H1 (cell line): ENCODE measurements at regions of chr15 and their contacts with region 1.

Region 1: GRCh38 chr15:45705510-45706473 is 71.0 kb downstream of the SQOR start:
- DNase-seq: peak; percentile 68 to 83
- H3K4me3 ChIP-seq: peak overlapping the region; percentile 38 to 72 (median 62)
- H3K27ac ChIP-seq: no peak overlapping the region
- H3K4me1 ChIP-seq: no peaks in the 10 kb centered on the region
- H3K27me3 ChIP-seq: peaks cover 0 to 3% (median 0%) of the 10 kb centered on the region in 4 experiments; a peak in 3 of 7 replicates
- CTCF ChIP-seq: peak; percentile 67 to 90 (median 74)
- EP300 ChIP-seq: 0 out of 3 replicates have a peak, but pooled peaks of 1 of the 2 experiments have one; percentile 4
- POLR2A ChIP-seq: no peak
- RAD21 ChIP-seq: peak; percentile 82 to 84

Region 2: DNA sequence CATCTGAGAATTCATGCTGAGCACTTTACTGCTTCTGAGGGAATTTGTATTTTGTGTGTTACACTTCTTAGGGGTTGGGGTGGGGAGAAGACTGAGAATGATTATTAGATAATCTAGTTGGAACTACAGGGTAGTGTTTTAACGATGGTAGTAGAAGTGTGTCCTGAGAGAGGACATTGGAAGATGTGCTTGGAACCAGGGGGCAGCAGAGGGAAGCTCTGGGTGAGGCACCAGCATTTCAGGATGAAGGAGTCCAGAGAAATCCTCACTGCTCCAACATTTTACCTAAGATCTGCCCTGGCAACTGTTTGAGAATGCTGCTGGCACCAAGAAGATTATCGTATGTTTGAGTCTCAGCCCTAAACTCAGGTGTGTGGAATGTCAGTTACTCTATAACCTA is 74.6 kb after region 1 on chr15:
- CTCF ChIA-PET with region 1: interaction called, 10 read pairs
- POLR2A ChIA-PET with region 1: no interaction called
- DNase-seq: no peak
- H3K4me3 ChIP-seq: no peak overlapping the region
- H3K27ac ChIP-seq: no peak overlapping the region
- H3K4me1 ChIP-seq: peaks cover 0 to 10% (median 3%) of the 10 kb centered on the region in 4 experiments; a peak in 5 of 7 replicates
- H3K27me3 ChIP-seq: no peaks in the 10 kb centered on the region
- CTCF ChIP-seq: peak in 2 of 3 experiments; percentile 31 to 42; a peak in 2 of 4 replicates
- EP300 ChIP-seq: no peak
- POLR2A ChIP-seq: no peak
- RAD21 ChIP-seq: peak; percentile 9 to 23; a peak in 1 of 4 replicates

Region 3: GRCh38 chr15:45842151-45842550 is 136.4 kb after region 1 on chr15:
- CTCF ChIA-PET with region 1: no interaction called
- POLR2A ChIA-PET with region 1: no interaction called
- DNase-seq: no peak
- H3K4me3 ChIP-seq: no peak overlapping the region
- H3K27ac ChIP-seq: no peak overlapping the region
- H3K4me1 ChIP-seq: no peaks in the 10 kb centered on the region
- H3K27me3 ChIP-seq: no peaks in the 10 kb centered on the region
- CTCF ChIP-seq: no peak
- EP300 ChIP-seq: no peak
- POLR2A ChIP-seq: no peak
- RAD21 ChIP-seq: no peak